Activated CD8-positive, alpha-beta memory T cell treated with anti-CD3 and anti-CD28 coated beads, Interleukin-2, amount 10 ng/mL, durations not matched to agents 7 days and 5 days (primary cell): ENCODE measurements at regions of chr21 and their contacts with region 1.

Region 1: DNA sequence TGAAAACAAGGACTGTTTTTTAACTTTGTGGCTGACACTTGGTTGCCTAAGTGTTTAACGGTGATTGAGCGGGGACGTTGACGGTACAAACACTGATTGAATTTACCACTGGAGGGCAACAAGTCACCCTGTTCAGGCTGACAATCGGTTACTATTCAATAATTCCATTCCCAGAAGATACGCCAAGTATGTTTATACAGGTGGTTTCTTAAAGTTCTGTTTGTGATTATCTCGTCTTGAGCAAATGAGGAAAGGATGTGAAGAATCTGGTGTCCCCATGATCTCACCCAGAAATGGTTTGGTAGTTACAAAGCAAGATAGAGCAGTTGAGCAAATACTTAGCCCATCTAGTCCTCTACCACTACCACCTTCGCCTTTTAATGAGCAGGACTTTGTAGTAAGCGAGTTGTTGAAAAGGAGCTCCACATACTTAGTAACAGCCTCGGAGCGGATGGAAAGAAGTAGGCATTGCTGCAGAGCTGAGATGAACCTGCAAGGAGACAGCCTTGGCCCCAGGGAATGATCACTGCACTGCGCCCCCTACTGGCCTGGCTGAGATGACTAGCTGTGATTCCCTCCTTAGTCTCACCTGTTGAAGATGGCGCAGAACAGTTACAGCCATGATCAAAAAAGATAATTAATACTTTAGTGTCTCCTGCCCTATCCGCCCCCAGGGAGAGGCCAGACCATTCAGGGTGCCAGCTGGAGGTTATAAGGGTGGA is 36.3 kb downstream of the IFNAR1 start:
- DNase-seq: peak; percentile 90
- ATAC-seq: peak; percentile 82
- H3K4me3 Mint-ChIP-seq: peak overlapping the region; percentile 71
- H3K27ac Mint-ChIP-seq: peak overlapping the region; percentile 73
- H3K4me1 Mint-ChIP-seq: peaks cover 22% of the 10 kb centered on the region
- H3K27me3 Mint-ChIP-seq: no peaks in the 10 kb centered on the region

Region 2: GRCh38 chr21:33199516-33200217 is 161.4 kb before region 1 on chr21:
- CTCF ChIA-PET with region 1: interaction called, 40 read pairs
- DNase-seq: peak; percentile 87
- ATAC-seq: peak; percentile 89
- H3K4me3 Mint-ChIP-seq: no peak overlapping the region
- H3K27ac Mint-ChIP-seq: peak overlapping the region; percentile 37
- H3K4me1 Mint-ChIP-seq: peaks cover 22% of the 10 kb centered on the region
- H3K27me3 Mint-ChIP-seq: peaks cover 27% of the 10 kb centered on the region

Region 3: GRCh38 chr21:33238565-33239255 is 122.3 kb before region 1 on chr21:
- CTCF ChIA-PET with region 1: interaction called, 13 read pairs
- DNase-seq: peak; percentile 50
- ATAC-seq: peak; percentile 70
- H3K4me3 Mint-ChIP-seq: peak overlapping the region; percentile 45
- H3K27ac Mint-ChIP-seq: peak overlapping the region; percentile 90
- H3K4me1 Mint-ChIP-seq: peaks cover 70% of the 10 kb centered on the region
- H3K27me3 Mint-ChIP-seq: no peaks in the 10 kb centered on the region

Region 4: DNA sequence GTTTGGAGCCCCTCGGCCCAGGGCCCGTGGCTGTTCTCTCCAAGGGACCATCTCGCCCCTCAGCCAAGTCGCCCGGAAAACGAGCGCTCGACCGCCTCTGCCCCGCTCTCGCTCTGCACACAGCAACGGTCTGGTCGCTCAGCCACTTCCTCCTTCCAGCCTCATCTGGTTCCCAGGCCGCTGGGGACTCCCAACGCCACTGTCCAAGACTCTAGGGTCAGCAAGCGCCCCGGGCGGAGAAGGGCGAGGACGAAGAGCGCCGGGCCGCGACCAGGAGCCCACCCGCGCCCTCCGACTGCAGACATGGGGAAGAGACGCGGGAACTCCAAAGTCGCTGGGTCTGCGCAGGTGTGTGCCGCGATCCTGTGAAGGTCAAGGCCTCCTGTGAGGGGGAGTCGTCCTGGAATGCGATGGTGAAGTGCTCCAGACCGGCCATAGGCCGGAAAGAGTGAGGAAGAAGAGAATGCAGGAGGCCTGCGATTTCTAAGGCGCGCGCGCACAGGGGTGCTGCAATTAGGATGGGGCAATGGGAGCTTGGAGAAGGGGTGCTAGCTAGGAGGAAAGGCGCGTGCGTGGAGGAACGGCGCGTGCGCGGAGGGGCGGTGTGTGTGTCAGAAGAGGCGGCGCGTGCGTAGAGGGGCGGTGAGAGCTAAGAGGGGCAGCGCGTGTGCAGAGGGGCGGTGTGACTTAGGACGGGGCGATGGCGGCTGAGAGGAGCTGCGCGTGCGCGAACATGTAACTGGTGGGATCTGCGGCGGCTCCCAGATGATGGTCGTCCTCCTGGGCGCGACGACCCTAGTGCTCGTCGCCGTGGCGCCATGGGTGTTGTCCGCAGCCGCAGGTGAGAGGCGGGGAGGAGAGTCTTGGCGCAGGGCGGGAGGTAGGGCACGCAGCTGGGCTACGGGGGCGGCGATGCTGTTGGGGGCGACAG is 36.5 kb before region 1 on chr21 and contains the start of gene IFNAR1:
- CTCF ChIA-PET with region 1: interaction called, 39 read pairs
- DNase-seq: peak; percentile 99
- ATAC-seq: peak; percentile 97
- H3K4me3 Mint-ChIP-seq: no peak within 1 kb of the TSS
- H3K27ac Mint-ChIP-seq: no peak within 1 kb of the TSS
- H3K4me1 Mint-ChIP-seq: peaks cover 16% of the 10 kb centered on the region
- H3K27me3 Mint-ChIP-seq: peaks cover 2% of the 10 kb centered on the region
- total RNA-seq, gene IFNAR1: 26.2 to 30.8 TPM

Region 5: GRCh38 chr21:33348706-33349105 is 12.3 kb before region 1 on chr21:
- CTCF ChIA-PET with region 1: interaction called, 56 read pairs
- DNase-seq: no peak
- ATAC-seq: no peak
- H3K4me3 Mint-ChIP-seq: no peak overlapping the region
- H3K27ac Mint-ChIP-seq: no peak overlapping the region
- H3K4me1 Mint-ChIP-seq: peaks cover 3% of the 10 kb centered on the region
- H3K27me3 Mint-ChIP-seq: no peaks in the 10 kb centered on the region

Region 6: GRCh38 chr21:33441489-33442477 is 80.7 kb after region 1 on chr21:
- CTCF ChIA-PET with region 1: interaction called, 25 read pairs
- DNase-seq: no peak
- ATAC-seq: no peak
- H3K4me3 Mint-ChIP-seq: no peak overlapping the region
- H3K27ac Mint-ChIP-seq: no peak overlapping the region
- H3K4me1 Mint-ChIP-seq: peaks cover 3% of the 10 kb centered on the region
- H3K27me3 Mint-ChIP-seq: no peaks in the 10 kb centered on the region

Region 7: DNA sequence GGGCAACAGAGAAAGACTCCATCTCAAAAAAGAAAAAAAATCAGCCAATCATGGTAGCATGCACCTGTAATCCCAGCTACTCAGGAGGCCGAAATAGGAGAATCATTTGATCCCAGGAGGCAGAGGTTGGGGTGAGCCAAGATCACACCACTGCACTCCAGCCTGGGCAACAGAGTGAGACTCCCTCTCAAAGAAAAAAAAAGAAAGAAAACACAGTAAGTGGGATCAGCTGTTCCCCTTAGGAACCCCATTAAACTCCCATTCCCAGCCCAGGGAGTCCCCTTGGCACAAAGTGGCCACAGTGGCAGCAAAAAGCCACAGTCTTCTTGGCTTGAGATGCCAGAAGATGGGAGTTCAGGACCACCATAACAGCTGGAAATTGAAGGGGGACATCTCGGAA is 109.7 kb after region 1 on chr21:
- CTCF ChIA-PET with region 1: no interaction called
- DNase-seq: no peak
- ATAC-seq: no peak
- H3K4me3 Mint-ChIP-seq: no peak overlapping the region
- H3K27ac Mint-ChIP-seq: no peak overlapping the region
- H3K4me1 Mint-ChIP-seq: no peaks in the 10 kb centered on the region
- H3K27me3 Mint-ChIP-seq: no peaks in the 10 kb centered on the region

Region 8: DNA sequence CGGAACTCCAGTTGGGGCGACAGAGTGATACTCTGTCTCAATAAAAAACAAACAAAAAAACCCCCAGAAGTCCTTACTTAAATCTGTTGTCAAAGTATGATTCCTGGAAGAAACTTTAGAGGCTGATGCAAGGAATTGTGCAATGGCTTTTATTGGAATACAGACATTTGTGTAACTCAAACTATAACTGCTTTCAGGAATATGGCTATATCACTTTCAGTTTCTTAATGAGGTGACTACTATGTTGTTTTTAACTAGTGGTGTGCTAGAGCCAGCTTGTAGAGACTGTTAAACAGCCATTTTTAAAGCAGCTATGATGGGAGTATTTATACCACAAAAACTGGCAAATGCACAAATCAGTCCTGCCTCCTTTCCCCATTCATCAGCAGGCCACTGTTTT is 153.2 kb after region 1 on chr21:
- CTCF ChIA-PET with region 1: no interaction called
- DNase-seq: no peak
- ATAC-seq: no peak
- H3K4me3 Mint-ChIP-seq: no peak overlapping the region
- H3K27ac Mint-ChIP-seq: peak overlapping the region; percentile 75
- H3K4me1 Mint-ChIP-seq: peaks cover 15% of the 10 kb centered on the region
- H3K27me3 Mint-ChIP-seq: no peaks in the 10 kb centered on the region